Heart left ventricle (tissue), 16 donors: ENCODE measurements at regions of chr2 and their contacts with region 1.

Region 1: DNA sequence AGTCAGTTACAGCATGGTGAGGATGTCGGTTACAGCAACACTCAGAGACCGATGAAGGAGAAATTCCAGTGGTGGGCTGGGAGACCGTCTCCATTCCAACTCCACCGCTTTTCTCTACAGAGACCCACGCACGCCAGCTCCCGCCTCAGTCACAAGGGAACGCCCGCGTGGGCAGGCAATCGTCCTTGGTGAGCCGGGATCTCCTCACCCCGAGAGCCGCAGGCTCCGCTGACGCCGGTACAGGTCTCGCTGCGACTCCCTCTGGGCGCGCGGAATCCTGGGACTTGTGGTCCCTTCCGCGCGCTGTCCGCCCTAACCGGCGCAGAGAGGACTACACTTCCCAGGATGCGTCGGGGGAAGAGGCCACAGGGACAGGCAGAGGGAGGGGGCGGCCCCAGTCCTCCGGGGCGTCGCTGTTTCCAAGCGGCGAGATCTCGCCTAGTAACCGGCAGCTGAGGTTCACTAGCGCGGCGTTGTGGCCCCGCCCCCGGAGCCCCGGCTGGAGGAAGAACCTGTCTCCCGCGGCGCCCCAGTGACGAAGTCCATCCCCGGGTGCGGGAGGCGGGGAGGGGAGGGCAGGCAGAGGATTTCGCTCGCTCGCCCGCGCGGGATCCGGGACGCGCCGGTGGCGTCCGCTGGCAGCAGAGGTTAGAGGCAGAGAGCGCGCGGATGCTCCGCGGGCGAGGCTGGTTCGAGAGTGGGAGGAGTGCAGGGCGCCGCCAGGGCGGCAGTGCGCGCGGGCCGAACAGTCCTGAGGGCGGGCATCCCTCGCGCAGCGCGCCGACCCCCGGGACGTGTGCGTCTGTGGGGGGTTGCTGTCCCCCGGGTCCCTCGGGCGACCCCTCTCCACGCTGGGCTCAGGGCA is at the start of gene EML6:
- DNase-seq: peak; percentile 98 to 99 (median 98)
- ATAC-seq: peak; percentile 100
- H3K4me3 ChIP-seq: peak within 1 kb of the TSS; percentile 45 to 89 (median 73)
- H3K27ac ChIP-seq: peak within 1 kb of the TSS in 11 of 12 donors; percentile 32 to 82 (median 76)
- H3K4me1 ChIP-seq: peaks cover 0 to 26% (median 9%) of the 10 kb centered on the region in 12 donors
- H3K27me3 ChIP-seq: peaks cover 0 to 18% (median 0%) of the 10 kb centered on the region in 9 donors
- CTCF ChIP-seq: peak in 7 of 12 donors; percentile 7 to 48 (median 24)
- POLR2A ChIP-seq: peak in 1 of 2 donors; percentile 82
- total RNA-seq, gene EML6: 0.08 to 1.2 (median 0.58) TPM

Region 2: DNA sequence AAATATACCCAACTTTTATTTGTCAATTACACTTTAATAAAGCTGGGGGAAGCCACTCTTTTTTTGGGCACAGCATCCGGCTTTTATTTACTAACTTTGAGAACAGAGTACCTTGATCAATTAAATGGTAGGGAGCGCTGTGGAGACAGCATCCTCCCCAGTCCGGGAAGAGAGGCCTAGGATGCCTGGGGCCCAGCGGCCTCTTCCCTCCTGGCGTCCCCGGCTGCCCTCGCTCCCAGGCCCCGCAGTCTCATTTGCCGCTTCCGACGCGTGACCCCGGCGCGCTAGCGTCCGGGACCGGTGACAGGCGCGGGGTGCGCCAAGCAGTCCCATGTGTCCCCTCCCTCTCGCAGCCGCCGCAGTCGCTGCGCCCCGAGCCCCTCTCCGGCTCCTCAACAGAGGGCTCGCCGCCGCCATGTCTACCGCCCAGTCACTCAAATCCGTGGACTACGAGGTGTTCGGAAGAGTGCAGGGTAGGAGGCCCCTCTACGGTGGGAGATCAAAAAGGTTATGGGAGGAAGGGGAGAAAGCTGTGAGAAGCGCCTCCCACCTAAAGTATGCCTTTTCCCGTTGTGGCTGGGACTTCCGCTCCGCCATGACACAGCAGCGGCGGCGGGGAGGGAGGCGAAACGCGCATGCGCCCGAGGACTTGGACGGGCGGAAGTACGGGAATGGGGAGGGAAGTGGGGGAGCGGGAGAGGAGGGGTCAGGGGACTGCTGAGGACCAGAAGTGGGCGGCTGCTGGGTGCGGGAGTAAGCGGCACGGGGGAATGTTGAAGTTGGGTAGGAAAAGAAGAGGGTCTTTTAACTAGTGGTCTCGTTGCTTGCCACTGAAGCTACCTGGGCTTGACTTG is 607.9 kb before region 1 on chr2 and contains the start of gene ACYP2:
- intact Hi-C with region 1: loop called in 2 of 10 experiments (anchors 5 kb)
- DNase-seq: peak; percentile 97 to 99 (median 98)
- ATAC-seq: peak; percentile 98 to 99 (median 98)
- H3K4me3 ChIP-seq: peak within 1 kb of the TSS; percentile 50 to 92 (median 72)
- H3K27ac ChIP-seq: peak within 1 kb of the TSS; percentile 94 to 100 (median 98)
- H3K4me1 ChIP-seq: peaks cover 0 to 15% (median 6%) of the 10 kb centered on the region in 12 donors
- H3K27me3 ChIP-seq: no peaks in the 10 kb centered on the region
- CTCF ChIP-seq: peak in 7 of 12 donors; percentile 18 to 50 (median 25)
- POLR2A ChIP-seq: peak; percentile 5 to 82
- total RNA-seq, gene ACYP2: 39.7 to 83.1 (median 53.2) TPM

Region 3: DNA sequence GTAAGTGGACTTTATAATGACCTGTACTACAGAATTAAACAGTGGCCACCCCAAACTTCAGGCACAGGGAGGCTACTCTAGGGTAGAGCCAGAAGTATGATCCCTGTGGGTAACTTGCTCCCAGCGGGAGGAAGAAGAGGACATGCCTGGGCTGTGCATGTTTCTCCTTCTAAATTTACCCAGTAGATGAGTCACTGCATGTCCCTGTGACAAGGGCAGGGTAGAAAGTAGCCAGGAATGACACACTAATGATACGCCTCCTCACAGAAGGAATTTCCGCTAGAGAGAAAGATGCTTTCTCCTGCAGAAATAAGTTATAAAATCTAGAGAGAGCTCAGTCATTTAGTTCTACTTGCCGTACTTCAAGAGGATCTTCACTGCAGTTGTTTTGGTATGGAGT is 600.4 kb before region 1 on chr2:
- intact Hi-C with region 1: loop called in 2 of 10 experiments (anchors 5 kb)
- DNase-seq: peak in 4 of 5 donors; percentile 36 to 59 (median 51)
- ATAC-seq: peak; percentile 94 to 98 (median 97)
- H3K4me3 ChIP-seq: peak overlapping the region in 9 of 12 donors; percentile 8 to 55 (median 41)
- H3K27ac ChIP-seq: peak overlapping the region; percentile 28 to 92 (median 62)
- H3K4me1 ChIP-seq: peaks cover 0 to 25% (median 8%) of the 10 kb centered on the region in 12 donors
- H3K27me3 ChIP-seq: no peaks in the 10 kb centered on the region
- CTCF ChIP-seq: no peak
- POLR2A ChIP-seq: no peak